BJ (cell line): ENCODE measurements at regions of chr3 and their contacts with region 1.

Region 1: DNA sequence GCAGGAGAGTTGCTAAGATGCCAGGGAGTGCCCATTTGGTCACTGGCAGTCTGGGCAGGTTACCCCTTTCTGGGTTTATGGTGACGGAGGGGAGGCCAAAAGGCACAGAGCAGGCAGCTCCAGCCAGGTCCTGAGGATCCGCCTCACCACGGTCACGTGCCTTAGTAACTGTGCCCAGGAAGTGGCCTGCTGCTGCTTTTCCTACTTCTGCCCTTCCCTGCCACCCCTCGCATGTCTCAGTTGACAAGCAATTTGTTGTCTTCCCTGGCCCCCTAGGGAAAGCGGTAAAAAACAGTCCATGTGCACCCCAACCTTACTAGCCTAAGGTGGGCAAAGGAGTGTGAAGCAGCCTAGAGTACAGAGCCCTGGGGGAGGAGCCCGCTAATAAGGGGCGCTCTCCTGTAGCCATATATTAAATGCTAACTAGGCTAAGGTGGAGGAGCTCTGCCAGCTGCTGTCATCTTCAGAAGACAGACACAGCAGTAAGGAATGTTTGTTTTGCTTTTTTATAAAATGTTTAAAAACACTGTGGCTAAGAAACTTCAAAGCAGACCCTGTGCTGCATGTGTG is 9.1 kb upstream of the LIPH start:
- DNase-seq: no peak
- H3K4me3 ChIP-seq: no peak overlapping the region
- H3K27me3 ChIP-seq: no peaks in the 10 kb centered on the region
- CTCF ChIP-seq: no peak

Region 2: DNA sequence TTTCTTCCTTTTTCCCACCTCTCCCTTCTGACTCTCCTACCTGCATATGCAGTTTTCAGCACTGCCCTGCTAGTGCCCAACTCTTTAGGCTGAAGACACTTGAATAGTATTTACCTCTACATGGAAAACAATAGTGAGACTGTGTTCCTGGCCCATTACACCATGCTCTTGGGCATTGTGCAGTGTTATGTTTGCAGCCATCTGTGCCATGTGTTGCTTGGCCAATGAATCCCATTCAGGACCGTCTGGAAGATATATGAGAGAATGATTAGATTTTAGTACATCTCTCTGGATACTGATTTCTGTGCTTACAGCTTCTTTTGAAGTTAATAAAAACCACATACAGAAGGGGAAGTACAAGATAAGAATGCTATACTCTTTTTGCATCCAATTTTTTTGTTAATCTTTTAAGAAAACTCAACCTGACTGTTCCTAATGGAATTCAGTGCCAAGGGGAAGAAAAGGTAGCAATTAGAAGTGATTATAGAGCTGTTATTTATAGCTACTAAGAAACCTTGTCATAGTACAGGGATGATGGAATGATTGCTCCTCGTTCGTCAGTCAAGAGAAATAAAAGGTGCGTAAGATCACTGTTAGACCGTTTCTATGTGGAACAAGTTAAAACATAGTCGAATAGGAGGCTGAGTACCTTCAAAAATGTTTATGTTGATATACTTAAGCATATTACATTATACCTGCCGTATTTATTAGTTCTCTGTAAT is 121.6 kb before region 1 on chr3:
- CTCF ChIA-PET with region 1: no interaction called
- POLR2A ChIA-PET with region 1: no interaction called
- DNase-seq: no peak
- H3K4me3 ChIP-seq: no peak overlapping the region
- H3K27me3 ChIP-seq: no peaks in the 10 kb centered on the region
- CTCF ChIP-seq: no peak

Region 3: DNA sequence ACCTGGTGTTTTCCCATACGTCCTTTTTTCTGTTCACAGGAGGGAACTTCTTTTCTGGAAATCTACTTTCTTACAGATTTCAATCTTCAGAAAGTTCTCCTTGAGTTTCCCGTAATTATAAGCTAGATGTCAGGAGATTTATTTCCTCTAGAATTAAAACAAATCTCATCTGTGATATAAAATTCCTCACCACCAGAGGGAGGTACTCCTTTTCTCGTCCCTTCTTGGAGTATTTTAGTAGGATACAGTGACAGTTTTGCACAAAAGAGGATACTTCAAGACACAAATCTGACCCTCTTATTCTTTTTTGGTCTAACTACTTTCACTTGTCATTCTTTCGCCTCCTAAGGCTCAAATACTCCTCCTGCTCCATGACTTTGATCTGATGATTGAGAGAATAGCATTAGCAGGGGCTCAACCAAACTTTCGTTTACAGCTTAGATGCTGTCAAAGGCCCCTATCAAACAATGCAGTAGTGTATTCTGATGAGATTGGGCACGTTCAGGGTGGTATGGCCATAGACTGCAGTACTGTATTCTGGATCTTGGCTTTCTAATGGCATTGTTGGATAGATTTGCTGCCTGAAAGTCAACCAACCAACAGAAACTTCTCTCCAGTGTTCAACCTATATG is 100.6 kb before region 1 on chr3:
- CTCF ChIA-PET with region 1: interaction called, 32 read pairs
- POLR2A ChIA-PET with region 1: no interaction called
- DNase-seq: no peak
- H3K4me3 ChIP-seq: no peak overlapping the region
- H3K27me3 ChIP-seq: no peaks in the 10 kb centered on the region
- CTCF ChIP-seq: 0 out of 2 replicates have a peak, but pooled peaks have one; percentile 15

Region 4: DNA sequence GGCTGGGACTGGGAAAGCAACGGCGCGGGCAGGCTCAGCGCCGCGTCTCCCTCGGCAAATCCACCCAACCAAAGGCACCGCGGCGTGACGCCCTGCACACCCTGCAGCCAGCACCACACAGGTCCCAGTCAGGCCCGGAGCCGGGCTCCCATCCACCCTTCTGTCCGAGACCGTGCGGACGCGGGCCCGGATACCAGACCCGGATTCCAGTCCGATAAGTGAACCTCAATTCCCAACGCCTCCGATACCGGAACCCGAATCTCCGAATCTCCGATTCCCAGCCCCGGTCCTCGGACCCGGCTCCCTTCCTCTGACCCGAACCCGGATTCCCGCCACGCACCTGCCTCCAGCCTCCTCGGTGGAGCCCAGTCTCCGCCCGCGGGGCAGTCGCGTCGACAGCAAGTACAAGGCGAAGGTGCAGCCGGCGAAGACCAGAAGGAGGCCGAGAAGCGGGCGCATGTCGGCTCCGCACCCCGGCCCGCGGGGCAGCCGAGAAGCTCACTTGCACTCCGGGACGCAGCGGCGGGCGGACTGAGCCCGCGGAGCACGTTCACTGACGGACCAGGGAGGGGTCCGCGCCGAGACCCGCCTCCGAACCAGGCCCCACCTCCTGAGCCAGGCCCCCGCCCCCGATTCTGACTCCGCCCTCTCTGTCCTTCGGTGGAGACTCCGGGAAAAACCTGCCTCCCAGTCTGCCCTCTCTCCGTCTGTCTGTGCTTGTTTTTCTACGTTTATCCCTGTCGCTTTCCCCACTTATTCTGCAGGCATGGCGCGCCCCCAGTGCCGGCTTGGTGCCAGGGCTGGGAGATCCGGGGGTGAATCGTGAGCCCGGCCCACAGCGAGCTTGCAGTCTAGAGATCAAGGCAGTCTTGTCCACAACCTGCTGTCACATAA is 62.7 kb before region 1 on chr3 and contains the start of gene TMEM41A:
- CTCF ChIA-PET with region 1: interaction called, 11 read pairs
- POLR2A ChIA-PET with region 1: no interaction called
- DNase-seq: peak; percentile 35
- H3K4me3 ChIP-seq: peak within 1 kb of the TSS; percentile 79
- H3K27me3 ChIP-seq: peaks cover 3% of the 10 kb centered on the region; the same call in 1 of the 2 replicates
- CTCF ChIP-seq: no peak
- polyA plus RNA-seq, gene TMEM41A: 13.8 and 18.9 TPM in 2 replicates

Region 5: GRCh38 chr3:185519021-185519420 is 42.4 kb before region 1 on chr3:
- CTCF ChIA-PET with region 1: no interaction called
- POLR2A ChIA-PET with region 1: no interaction called
- DNase-seq: no peak
- H3K4me3 ChIP-seq: no peak overlapping the region
- H3K27me3 ChIP-seq: peaks cover 10% of the 10 kb centered on the region
- CTCF ChIP-seq: no peak

Region 6: DNA sequence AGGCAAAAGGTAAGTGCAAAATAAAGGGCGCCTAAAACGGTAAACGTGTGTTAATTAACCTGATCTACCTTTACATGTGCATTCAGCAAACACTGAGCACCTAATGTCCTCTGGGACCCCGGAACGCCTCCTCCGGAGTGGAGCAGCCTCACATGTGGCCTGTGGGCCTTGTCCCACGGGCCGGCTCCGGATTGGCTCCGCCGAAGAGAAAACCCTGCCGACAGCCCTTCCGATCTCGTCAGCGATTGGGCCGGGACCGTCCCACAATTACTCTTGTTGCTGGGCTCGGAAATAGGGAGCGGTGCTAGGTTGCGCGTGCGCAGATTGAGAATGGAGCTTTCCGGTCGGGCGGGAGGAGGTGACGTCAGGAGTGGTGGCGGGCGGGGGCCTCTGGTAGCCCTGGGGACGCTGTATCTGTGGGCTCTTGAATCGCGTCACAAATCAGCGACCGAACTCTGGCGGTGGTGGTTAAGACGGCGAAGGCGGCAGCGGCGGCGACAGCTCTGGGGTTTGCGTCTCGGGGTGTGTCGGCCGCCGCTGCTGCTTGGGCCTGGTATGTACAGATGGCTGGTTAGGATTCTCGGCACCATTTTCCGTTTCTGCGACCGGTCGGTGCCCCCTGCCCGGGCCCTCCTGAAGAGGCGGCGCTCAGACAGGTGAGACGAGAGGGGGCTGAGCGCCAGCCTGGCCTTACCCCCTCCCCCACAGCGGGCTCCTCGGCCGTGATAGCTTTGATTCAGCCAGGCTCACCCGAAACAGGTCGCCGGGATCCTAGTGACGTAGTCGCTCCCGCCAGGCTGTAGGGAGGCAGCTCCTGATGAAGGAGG is 24.6 kb after region 1 on chr3 and contains the start of gene SENP2:
- CTCF ChIA-PET with region 1: interaction called, 11 read pairs
- POLR2A ChIA-PET with region 1: no interaction called
- DNase-seq: peak; percentile 95
- H3K4me3 ChIP-seq: peak within 1 kb of the TSS; percentile 88
- H3K27me3 ChIP-seq: no peaks in the 10 kb centered on the region
- CTCF ChIP-seq: no peak
- polyA plus RNA-seq, gene SENP2: 9.9 and 16.9 TPM in 2 replicates